Heart right ventricle (tissue), 16 donors: ENCODE measurements at regions of chr1 and their contacts with region 1.

Region 1: GRCh38 chr1:62841587-62842169 is 57.7 kb downstream of the ATG4C start:
- DNase-seq: peak in 1 of 2 donors; percentile 43
- ATAC-seq: peak in 6 of 8 donors; percentile 38 to 71 (median 63)
- H3K4me3 ChIP-seq: no peak overlapping the region
- H3K27ac ChIP-seq: no peak overlapping the region
- H3K4me1 ChIP-seq: peaks cover 0 to 4% (median 0%) of the 10 kb centered on the region in 9 donors
- H3K27me3 ChIP-seq: no peaks in the 10 kb centered on the region
- CTCF ChIP-seq: peak; percentile 53 to 85 (median 76)

Region 2: GRCh38 chr1:63442141-63442475 is 600.4 kb after region 1 on chr1:
- intact Hi-C with region 1: loop called in 3 of 10 experiments (anchors 5 kb)
- DNase-seq: no peak
- ATAC-seq: no peak
- H3K4me3 ChIP-seq: no peak overlapping the region
- H3K27ac ChIP-seq: no peak overlapping the region
- H3K4me1 ChIP-seq: peaks cover 0 to 4% (median 0%) of the 10 kb centered on the region in 9 donors
- H3K27me3 ChIP-seq: no peaks in the 10 kb centered on the region
- CTCF ChIP-seq: no peak

Region 3: GRCh38 chr1:63522891-63523728 is 681.4 kb after region 1 on chr1 and contains the starts of genes EFCAB7 and ITGB3BP:
- intact Hi-C with region 1: loop called in 1 of 10 experiments (anchors 10 kb)
- DNase-seq: peak; percentile 75 to 85
- ATAC-seq: peak; percentile 92 to 97 (median 96)
- H3K4me3 ChIP-seq: peak within 1 kb of the TSS; percentile 49 to 86 (median 74)
- H3K27ac ChIP-seq: peak within 1 kb of the TSS; percentile 78 to 96 (median 89)
- H3K4me1 ChIP-seq: peaks cover 3 to 24% (median 18%) of the 10 kb centered on the region in 9 donors
- H3K27me3 ChIP-seq: no peaks in the 10 kb centered on the region
- CTCF ChIP-seq: no peak
- total RNA-seq, gene EFCAB7: 4.5 to 10.7 (median 8.1) TPM
- total RNA-seq, gene ITGB3BP: 4.3 to 14.7 (median 7.4) TPM

Region 4: DNA sequence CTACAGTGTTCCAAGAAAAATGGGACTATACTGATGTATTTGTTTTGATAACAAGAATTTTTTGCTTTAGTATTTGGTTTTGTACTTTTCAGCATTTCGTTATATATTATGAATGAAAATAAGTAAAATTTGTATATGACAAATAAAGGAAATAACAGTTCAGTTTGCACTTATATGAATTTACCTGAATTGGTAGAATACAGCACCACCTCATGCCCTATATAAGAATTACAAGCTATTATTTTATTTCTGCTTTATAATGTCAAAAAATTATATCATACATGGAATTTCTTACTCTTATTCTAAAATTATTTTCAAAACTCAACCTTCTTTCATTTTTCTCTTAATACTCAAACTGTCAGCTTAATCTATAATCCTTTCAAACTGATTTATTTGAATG is 696.3 kb after region 1 on chr1:
- intact Hi-C with region 1: loop called in 3 of 10 experiments (anchors 10 kb)
- DNase-seq: no peak
- ATAC-seq: no peak
- H3K4me3 ChIP-seq: no peak overlapping the region
- H3K27ac ChIP-seq: no peak overlapping the region
- H3K4me1 ChIP-seq: no peaks in the 10 kb centered on the region
- H3K27me3 ChIP-seq: no peaks in the 10 kb centered on the region
- CTCF ChIP-seq: peak in 8 of 9 donors; percentile 4 to 62 (median 46)